Activated CD8-positive, alpha-beta T cell treated with anti-CD3 and anti-CD28 coated beads for 36 hours (primary cell): ENCODE measurements at regions of chr10 and their contacts with region 1.

Region 1: GRCh38 chr10:47047671-47048525 is 136.7 kb downstream of the PTPN20 start:
- DNase-seq: peak; percentile 88
- ATAC-seq: peak; percentile 76
- H3K4me3 Mint-ChIP-seq: no peak overlapping the region
- H3K27ac Mint-ChIP-seq: peak overlapping the region; percentile 31
- H3K4me1 Mint-ChIP-seq: peaks cover 20% of the 10 kb centered on the region
- H3K27me3 Mint-ChIP-seq: no peaks in the 10 kb centered on the region
- CTCF ChIP-seq: peak; percentile 90

Region 2: GRCh38 chr10:47016564-47016963 is 31.3 kb before region 1 on chr10:
- CTCF ChIA-PET with region 1: no interaction called
- POLR2A ChIA-PET with region 1: no interaction called
- intact Hi-C with region 1: no loop called
- DNase-seq: no peak
- ATAC-seq: no peak
- H3K4me3 Mint-ChIP-seq: no peak overlapping the region
- H3K27ac Mint-ChIP-seq: no peak overlapping the region
- H3K4me1 Mint-ChIP-seq: no peaks in the 10 kb centered on the region
- H3K27me3 Mint-ChIP-seq: no peaks in the 10 kb centered on the region
- CTCF ChIP-seq: no peak

Region 3: DNA sequence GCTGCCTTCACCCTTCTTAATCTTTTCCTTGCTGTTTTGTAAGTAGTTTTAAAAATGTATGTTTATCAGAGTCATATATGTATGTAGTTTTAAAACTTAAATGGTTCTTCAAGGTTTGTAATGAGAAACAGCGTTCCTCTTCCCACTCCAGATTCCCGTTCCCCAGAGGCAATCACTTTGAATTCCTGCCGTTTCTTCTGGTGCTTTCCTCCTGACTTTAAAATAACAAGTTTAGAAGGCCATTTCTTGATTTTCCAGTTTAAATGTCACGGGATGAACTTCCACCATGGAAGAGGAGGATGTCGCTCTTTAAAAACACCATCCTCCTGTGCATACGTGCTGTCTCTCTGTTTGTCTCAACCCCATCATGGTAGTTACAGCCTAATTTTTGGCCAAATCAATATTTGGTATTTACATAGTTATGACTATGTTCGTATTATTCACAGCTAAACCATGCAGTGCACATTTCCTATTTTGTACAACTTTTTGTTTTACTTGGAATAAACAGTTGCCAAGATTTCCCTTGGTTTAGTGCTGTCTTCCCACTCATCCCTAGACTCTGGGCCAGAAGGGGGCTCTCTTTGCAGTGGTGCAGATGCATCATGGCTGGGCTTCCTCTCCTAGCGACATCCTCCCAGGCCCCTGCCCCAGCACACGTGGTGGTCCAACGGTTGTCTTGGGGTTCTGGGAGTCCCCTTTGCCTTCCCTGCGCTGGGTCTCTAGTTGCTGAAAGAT is 14.7 kb after region 1 on chr10:
- CTCF ChIA-PET with region 1: interaction called, 11 read pairs
- POLR2A ChIA-PET with region 1: no interaction called
- intact Hi-C with region 1: no loop called
- DNase-seq: no peak
- ATAC-seq: no peak
- H3K4me3 Mint-ChIP-seq: no peak overlapping the region
- H3K27ac Mint-ChIP-seq: no peak overlapping the region
- H3K4me1 Mint-ChIP-seq: no peaks in the 10 kb centered on the region
- H3K27me3 Mint-ChIP-seq: no peaks in the 10 kb centered on the region
- CTCF ChIP-seq: no peak

Region 4: DNA sequence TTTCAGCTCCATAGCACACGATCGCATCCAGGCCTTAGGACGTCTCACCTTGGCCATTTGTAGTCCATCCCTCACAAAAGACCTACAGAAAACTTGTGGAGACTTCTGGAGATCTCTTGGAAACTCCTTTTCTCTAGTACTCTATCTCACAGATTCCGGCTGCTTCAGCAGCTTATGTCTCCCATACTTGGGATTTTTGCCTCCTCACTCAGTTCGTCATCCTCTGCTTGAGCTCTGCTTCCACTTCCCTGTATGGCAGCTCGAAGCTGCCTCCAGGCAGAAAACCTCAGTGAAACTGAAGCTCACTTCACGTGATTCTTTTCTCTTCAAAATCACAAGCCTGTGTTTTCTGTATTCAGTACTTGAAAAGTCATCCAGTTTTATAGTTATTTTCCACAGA is 73.4 kb after region 1 on chr10:
- CTCF ChIA-PET with region 1: interaction called, 12 read pairs
- POLR2A ChIA-PET with region 1: no interaction called
- intact Hi-C with region 1: no loop called
- DNase-seq: no peak
- ATAC-seq: no peak
- H3K4me3 Mint-ChIP-seq: no peak overlapping the region
- H3K27ac Mint-ChIP-seq: no peak overlapping the region
- H3K4me1 Mint-ChIP-seq: peaks cover 7% of the 10 kb centered on the region
- H3K27me3 Mint-ChIP-seq: no peaks in the 10 kb centered on the region
- CTCF ChIP-seq: no peak

Region 5: GRCh38 chr10:47190802-47191450 is 143.0 kb after region 1 on chr10:
- CTCF ChIA-PET with region 1: interaction called, 10 read pairs
- POLR2A ChIA-PET with region 1: no interaction called
- intact Hi-C with region 1: no loop called
- DNase-seq: no peak
- ATAC-seq: no peak
- H3K4me3 Mint-ChIP-seq: no peak overlapping the region
- H3K27ac Mint-ChIP-seq: no peak overlapping the region
- H3K4me1 Mint-ChIP-seq: peaks cover 21% of the 10 kb centered on the region
- H3K27me3 Mint-ChIP-seq: no peaks in the 10 kb centered on the region
- CTCF ChIP-seq: no peak

Region 6: DNA sequence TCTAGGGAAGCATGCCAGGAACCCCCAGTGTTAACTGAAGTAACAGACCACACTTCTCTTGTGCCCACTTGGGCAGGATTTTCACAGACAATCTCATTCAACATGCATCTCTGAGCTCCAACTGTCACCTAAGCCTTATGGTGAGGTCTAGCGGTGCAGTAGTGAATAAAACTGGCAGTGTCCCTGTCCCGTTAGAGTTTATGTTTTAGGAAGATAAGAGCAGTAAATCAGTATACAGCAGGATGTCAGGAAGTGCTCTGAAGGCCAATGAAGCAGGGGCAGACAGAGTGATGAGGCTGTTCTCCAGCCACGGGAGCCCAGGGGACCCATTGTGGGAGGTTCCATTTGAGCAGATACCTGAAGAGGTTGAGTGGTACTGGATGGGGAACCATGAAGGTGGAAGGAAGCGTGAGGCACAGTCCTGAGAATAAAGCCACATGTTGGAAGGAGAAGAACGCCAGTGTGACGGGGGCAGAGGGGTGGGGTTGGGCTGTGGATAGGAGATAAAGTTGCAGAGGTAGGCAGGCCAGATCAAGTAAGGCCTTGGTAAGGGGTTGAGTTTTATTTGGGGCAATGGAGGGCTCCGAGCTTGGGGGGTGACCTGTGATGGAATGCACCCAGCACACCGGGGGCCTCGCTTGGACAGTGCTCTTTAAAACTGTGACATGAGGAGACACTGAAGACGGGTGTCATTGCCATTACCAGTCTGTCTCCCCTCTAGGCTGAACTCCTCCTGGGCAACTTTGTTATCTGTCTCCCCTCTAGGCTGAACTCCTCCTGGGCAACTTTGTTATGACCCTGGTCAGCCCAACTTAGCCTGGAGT is 258.7 kb after region 1 on chr10:
- CTCF ChIA-PET with region 1: interaction called, 204 read pairs
- POLR2A ChIA-PET with region 1: interaction called, 3 read pairs
- intact Hi-C with region 1: no loop called
- DNase-seq: no peak
- ATAC-seq: no peak
- H3K4me3 Mint-ChIP-seq: no peak overlapping the region
- H3K27ac Mint-ChIP-seq: no peak overlapping the region
- H3K4me1 Mint-ChIP-seq: peaks cover 29% of the 10 kb centered on the region
- H3K27me3 Mint-ChIP-seq: no peaks in the 10 kb centered on the region
- CTCF ChIP-seq: no peak

Region 7: DNA sequence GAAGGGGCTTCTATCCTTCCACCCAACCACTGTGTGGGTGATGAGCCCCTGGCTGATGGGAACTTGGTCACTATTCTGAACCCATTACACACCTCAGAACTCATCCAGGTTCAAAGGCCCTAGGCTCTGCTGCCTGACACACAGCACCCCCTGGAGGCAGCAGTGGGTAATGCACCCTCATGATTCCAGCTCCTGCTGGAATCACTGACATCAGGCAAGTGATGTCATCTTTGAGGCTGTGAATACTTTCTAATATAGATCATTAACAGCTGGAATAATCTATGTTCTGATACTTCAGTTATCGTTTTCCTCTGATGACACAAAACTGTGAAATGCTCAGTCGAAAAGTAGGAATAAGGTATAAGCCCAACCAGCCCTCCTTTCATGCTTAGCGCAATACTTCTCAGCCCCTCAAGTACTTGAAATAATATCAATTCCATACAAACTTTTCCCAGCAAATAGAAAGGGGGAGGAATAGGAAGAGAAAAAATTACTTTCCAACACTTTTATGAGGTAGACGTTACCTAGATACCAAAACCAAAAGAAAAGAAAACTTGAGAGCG is 292.8 kb after region 1 on chr10:
- CTCF ChIA-PET with region 1: interaction called, 17 read pairs
- POLR2A ChIA-PET with region 1: no interaction called
- intact Hi-C with region 1: no loop called
- DNase-seq: peak; percentile 81
- ATAC-seq: peak; percentile 83
- H3K4me3 Mint-ChIP-seq: no peak overlapping the region
- H3K27ac Mint-ChIP-seq: no peak overlapping the region
- H3K4me1 Mint-ChIP-seq: no peaks in the 10 kb centered on the region
- H3K27me3 Mint-ChIP-seq: peaks cover 1% of the 10 kb centered on the region
- CTCF ChIP-seq: peak; percentile 99